AG04449 (cell line): ENCODE measurements at regions of chr6 and their contacts with region 1.

Region 1: GRCh38 chr6:57252975-57253374 is 30.9 kb upstream of the RAB23 start:
- DNase-seq: no peak
- H3K4me3 ChIP-seq: no peak overlapping the region
- CTCF ChIP-seq: no peak

Region 2: GRCh38 chr6:56995347-56995902 is 257.6 kb before region 1 on chr6:
- CTCF ChIA-PET with region 1: no interaction called
- POLR2A ChIA-PET with region 1: no interaction called
- DNase-seq: no peak
- H3K4me3 ChIP-seq: no peak overlapping the region
- CTCF ChIP-seq: no peak

Region 3: GRCh38 chr6:57267586-57268293 is 14.8 kb after region 1 on chr6:
- CTCF ChIA-PET with region 1: interaction called, 13 read pairs
- POLR2A ChIA-PET with region 1: interaction called, 6 read pairs
- DNase-seq: peak; percentile 99
- H3K4me3 ChIP-seq: no peak overlapping the region
- CTCF ChIP-seq: peak; percentile 60